MCF 10A (cell line): ENCODE measurements at regions of chr2 and their contacts with region 1.

Region 1: GRCh38 chr2:45935791-45936622 is 284.5 kb downstream of the PRKCE start:
- DNase-seq: peak; percentile 99
- H3K4me3 Mint-ChIP-seq: no peak overlapping the region
- H3K27ac Mint-ChIP-seq: peak overlapping the region; percentile 29
- H3K4me1 Mint-ChIP-seq: peaks cover 39% of the 10 kb centered on the region
- H3K27me3 Mint-ChIP-seq: no peaks in the 10 kb centered on the region
- CTCF ChIP-seq: peak; percentile 88

Region 2: GRCh38 chr2:44981136-44982108 is 954.6 kb before region 1 on chr2:
- CTCF ChIA-PET with region 1: no interaction called
- POLR2A ChIA-PET with region 1: no interaction called
- intact Hi-C with region 1: loop called (anchors 10 kb)
- DNase-seq: peak; percentile 75
- H3K4me3 Mint-ChIP-seq: no peak overlapping the region
- H3K27ac Mint-ChIP-seq: no peak overlapping the region
- H3K4me1 Mint-ChIP-seq: no peaks in the 10 kb centered on the region
- H3K27me3 Mint-ChIP-seq: no peaks in the 10 kb centered on the region
- CTCF ChIP-seq: peak; percentile 84

Region 3: GRCh38 chr2:45643543-45644542 is 292.2 kb before region 1 on chr2:
- CTCF ChIA-PET with region 1: interaction called, 25 read pairs
- POLR2A ChIA-PET with region 1: interaction called, 3 read pairs
- intact Hi-C with region 1: loop called (anchors 1 kb)
- DNase-seq: peak; percentile 62
- H3K4me3 Mint-ChIP-seq: peak overlapping the region; percentile 73
- H3K27ac Mint-ChIP-seq: peak overlapping the region; percentile 37
- H3K4me1 Mint-ChIP-seq: peaks cover 17% of the 10 kb centered on the region
- H3K27me3 Mint-ChIP-seq: no peaks in the 10 kb centered on the region
- CTCF ChIP-seq: peak; percentile 96

Region 4: DNA sequence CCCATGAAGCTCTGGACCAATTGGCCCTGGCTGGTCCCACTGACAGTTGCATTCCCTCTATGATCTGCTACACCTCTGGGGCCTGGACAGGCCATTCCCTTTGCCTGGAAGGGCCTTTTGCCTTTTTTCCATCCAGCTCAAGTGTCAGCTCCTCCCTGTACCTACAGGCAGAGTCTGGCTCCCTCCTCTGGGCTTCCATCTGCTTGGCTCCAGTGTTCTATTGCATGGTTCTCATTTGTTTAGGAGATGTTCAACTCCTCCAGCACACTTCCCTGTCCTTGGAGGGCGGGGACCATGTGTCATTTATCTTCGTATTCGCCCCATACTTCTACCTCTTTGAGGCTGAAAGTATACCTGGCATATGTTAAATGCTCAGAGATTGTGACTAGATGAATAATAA is 223.4 kb before region 1 on chr2:
- CTCF ChIA-PET with region 1: no interaction called
- POLR2A ChIA-PET with region 1: no interaction called
- intact Hi-C with region 1: no loop called
- DNase-seq: peak; percentile 11
- H3K4me3 Mint-ChIP-seq: no peak overlapping the region
- H3K27ac Mint-ChIP-seq: no peak overlapping the region
- H3K4me1 Mint-ChIP-seq: no peaks in the 10 kb centered on the region
- H3K27me3 Mint-ChIP-seq: no peaks in the 10 kb centered on the region
- CTCF ChIP-seq: no peak

Region 5: DNA sequence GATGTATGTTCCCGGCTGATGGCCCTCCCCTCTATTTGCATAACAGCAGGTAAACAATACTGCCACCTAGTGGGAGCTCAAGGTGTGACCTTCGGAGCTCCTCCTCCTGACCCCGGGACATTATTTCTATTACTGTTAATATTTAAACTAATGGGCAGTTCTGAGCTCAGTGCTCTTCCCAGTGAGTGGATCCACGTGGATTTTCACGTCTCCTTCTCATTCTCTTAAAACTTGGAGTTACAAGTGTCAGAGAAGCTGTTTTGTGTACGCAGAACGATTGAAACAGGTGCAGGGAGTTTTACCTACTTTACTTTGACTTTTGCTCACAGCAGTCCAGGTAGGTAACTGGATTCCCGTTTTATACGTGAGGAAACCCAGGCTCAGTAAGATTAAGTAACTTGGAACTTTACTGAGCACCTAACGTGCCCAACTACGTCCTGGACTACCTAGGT is 157.3 kb before region 1 on chr2:
- CTCF ChIA-PET with region 1: interaction called, 7 read pairs
- POLR2A ChIA-PET with region 1: no interaction called
- intact Hi-C with region 1: loop called (anchors 1 kb)
- DNase-seq: peak; percentile 75
- H3K4me3 Mint-ChIP-seq: no peak overlapping the region
- H3K27ac Mint-ChIP-seq: no peak overlapping the region
- H3K4me1 Mint-ChIP-seq: peaks cover 7% of the 10 kb centered on the region
- H3K27me3 Mint-ChIP-seq: no peaks in the 10 kb centered on the region
- CTCF ChIP-seq: peak; percentile 72

Region 6: GRCh38 chr2:45912109-45912508 is 23.9 kb before region 1 on chr2:
- CTCF ChIA-PET with region 1: interaction called, 11 read pairs
- POLR2A ChIA-PET with region 1: interaction called, 3 read pairs
- intact Hi-C with region 1: no loop called
- DNase-seq: no peak
- H3K4me3 Mint-ChIP-seq: no peak overlapping the region
- H3K27ac Mint-ChIP-seq: no peak overlapping the region
- H3K4me1 Mint-ChIP-seq: peaks cover 22% of the 10 kb centered on the region
- H3K27me3 Mint-ChIP-seq: no peaks in the 10 kb centered on the region
- CTCF ChIP-seq: no peak

Region 7: DNA sequence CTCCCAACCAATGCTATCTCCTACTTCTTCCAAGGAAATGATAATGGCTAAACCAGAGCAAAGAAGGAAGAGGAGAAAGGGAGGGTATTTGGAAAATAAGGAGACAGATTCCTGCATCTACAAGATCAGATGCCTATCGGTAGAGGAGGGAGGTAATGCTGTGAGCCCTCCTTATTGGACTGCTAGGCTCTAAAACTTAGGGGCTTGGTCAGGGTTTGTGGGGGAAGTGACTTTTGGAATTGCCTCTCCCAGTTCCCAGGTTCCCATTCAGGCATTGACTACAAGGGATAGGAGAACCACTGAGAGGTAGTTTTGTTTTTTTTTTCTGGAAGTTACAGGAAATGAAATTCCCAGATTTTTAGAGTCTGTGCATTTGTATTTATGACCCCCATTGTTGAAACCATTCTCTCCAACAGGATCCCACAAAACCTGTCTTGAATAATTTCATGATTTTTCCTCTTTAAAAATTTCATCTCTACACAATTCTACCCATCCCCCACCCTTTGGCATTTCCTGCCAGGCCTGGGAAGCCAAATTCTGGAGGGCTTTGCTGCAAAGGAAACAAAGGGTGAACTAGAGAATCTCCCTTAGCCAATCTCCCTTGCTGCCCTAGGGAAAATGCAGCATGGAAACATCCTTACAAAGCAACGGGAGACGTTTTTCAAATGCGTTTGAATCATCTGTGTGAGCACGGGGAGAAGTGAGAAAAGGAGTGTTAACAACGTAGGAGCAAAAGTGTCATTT is 79.1 kb after region 1 on chr2:
- CTCF ChIA-PET with region 1: no interaction called
- POLR2A ChIA-PET with region 1: no interaction called
- intact Hi-C with region 1: no loop called
- DNase-seq: peak; percentile 41
- H3K4me3 Mint-ChIP-seq: no peak overlapping the region
- H3K27ac Mint-ChIP-seq: no peak overlapping the region
- H3K4me1 Mint-ChIP-seq: no peaks in the 10 kb centered on the region
- H3K27me3 Mint-ChIP-seq: no peaks in the 10 kb centered on the region
- CTCF ChIP-seq: no peak

Region 8: GRCh38 chr2:46142546-46143428 is 206.8 kb after region 1 on chr2:
- CTCF ChIA-PET with region 1: no interaction called
- POLR2A ChIA-PET with region 1: no interaction called
- intact Hi-C with region 1: no loop called
- DNase-seq: peak; percentile 38
- H3K4me3 Mint-ChIP-seq: no peak overlapping the region
- H3K27ac Mint-ChIP-seq: no peak overlapping the region
- H3K4me1 Mint-ChIP-seq: peaks cover 9% of the 10 kb centered on the region
- H3K27me3 Mint-ChIP-seq: no peaks in the 10 kb centered on the region
- CTCF ChIP-seq: no peak